Aorta (tissue), 5 donors: ENCODE measurements at regions of chr3 and their contacts with region 1.

Region 1: GRCh38 chr3:156826144-156826895 is at the start of gene LEKR1:
- DNase-seq: peak; percentile 91 to 93
- ATAC-seq: peak; percentile 95
- H3K4me3 ChIP-seq: peak within 1 kb of the TSS; percentile 52 to 79
- H3K27ac ChIP-seq: peak within 1 kb of the TSS in 1 of 2 donors; percentile 84
- H3K4me1 ChIP-seq: no peaks in the 10 kb centered on the region
- H3K27me3 ChIP-seq: no peaks in the 10 kb centered on the region
- total RNA-seq, gene LEKR1: 0.30 to 1.3 TPM

Region 2: GRCh38 chr3:156691920-156692319 is 134.4 kb before region 1 on chr3:
- intact Hi-C with region 1: loop called in 1 of 2 experiments (anchors 5 kb)
- DNase-seq: no peak
- ATAC-seq: peak; percentile 44
- H3K4me3 ChIP-seq: no peak overlapping the region
- H3K27ac ChIP-seq: no peak overlapping the region
- H3K4me1 ChIP-seq: peaks cover 0 to 6% of the 10 kb centered on the region in 2 donors
- H3K27me3 ChIP-seq: no peaks in the 10 kb centered on the region